Breast epithelium (tissue), 4 donors: ENCODE measurements at regions of chr12 and their contacts with region 1.

Region 1: GRCh38 chr12:54680374-54680773 is 32.2 kb upstream of the DCD start:
- DNase-seq: no peak
- H3K4me3 ChIP-seq: no peak overlapping the region
- H3K27ac ChIP-seq: peak overlapping the region in 1 of 2 donors; percentile 21
- H3K4me1 ChIP-seq: peaks cover 0 to 5% of the 10 kb centered on the region in 2 donors
- H3K27me3 ChIP-seq: no peaks in the 10 kb centered on the region
- CTCF ChIP-seq: no peak
- POLR2A ChIP-seq: no peak

Region 2: DNA sequence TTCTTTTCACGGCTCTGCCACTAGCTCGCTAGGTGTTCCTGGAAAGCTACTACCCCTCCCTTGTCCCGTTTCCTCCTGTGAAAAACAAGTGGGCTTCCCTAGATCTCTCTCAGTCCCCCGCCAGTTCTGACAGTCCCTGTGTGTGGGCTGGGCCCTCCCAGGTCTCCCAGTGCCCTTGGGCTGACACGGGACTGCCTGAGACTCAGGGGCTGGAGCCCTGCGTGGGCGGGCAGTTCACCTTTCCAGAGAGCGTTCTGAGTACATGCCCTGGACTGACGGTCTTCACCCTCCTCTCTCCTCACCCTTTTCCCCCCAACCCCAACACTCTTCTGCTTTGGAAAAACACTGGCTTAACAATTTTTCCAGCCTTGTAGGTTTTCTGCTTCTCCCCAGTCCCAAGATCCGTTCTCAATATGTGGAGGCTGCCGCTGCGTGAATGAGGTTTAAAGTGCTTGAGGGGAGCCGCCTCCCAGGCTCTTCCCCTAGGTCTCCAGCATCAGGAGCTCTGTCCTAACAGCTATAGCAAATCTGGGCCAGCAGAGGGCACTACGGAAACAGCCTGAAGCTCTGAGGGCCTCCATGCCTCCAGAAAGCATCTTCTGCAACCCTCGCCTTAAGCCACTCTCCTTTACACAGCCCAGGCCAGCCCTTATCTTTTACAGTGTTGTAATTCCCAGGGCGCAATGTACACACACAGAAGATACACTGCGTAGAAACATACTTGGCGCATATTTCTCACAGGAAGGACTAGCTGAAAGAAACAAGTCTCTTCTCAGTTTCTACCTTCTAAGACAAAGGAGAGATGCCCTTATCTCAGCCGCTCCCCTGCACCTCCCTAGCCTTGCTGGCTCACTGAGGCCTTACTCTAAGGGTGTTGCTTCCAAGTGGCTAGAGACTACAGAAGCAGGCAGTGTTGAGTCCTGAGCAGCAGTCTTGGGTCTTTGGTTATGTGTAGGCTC is 21.8 kb before region 1 on chr12:
- intact Hi-C with region 1: no loop called
- DNase-seq: no peak
- H3K4me3 ChIP-seq: no peak overlapping the region
- H3K27ac ChIP-seq: peak overlapping the region in 1 of 2 donors; percentile 20
- H3K4me1 ChIP-seq: no peaks in the 10 kb centered on the region
- H3K27me3 ChIP-seq: no peaks in the 10 kb centered on the region
- CTCF ChIP-seq: peak in 1 of 3 donors; percentile 15
- POLR2A ChIP-seq: no peak

Region 3: GRCh38 chr12:54723379-54724256 is 43.2 kb after region 1 on chr12:
- intact Hi-C with region 1: no loop called
- DNase-seq: no peak
- H3K4me3 ChIP-seq: no peak overlapping the region
- H3K27ac ChIP-seq: no peak overlapping the region
- H3K4me1 ChIP-seq: no peaks in the 10 kb centered on the region
- H3K27me3 ChIP-seq: no peaks in the 10 kb centered on the region
- CTCF ChIP-seq: peak in 1 of 3 donors; percentile 12
- POLR2A ChIP-seq: no peak

Region 4: DNA sequence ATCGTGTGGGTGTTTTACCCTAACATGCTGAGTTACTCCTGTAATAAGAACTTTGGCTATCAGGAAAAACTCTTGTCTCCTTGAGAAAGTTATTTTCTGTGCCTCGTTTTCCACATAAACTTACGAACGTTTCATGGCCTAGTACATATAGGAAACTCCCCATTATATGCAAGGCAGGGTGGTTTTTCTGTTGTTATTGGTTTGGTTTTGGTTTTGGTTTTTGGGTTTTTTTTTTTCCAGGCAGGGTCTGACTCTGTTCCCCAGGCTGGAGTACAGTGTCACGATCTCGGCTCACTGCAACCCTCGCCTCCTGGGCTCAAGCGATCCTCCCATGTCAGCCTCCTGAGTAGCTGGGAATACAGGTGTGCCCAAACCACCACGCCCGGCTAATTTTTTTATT is 655.6 kb after region 1 on chr12:
- intact Hi-C with region 1: loop called (anchors 5 kb)
- DNase-seq: no peak
- H3K4me3 ChIP-seq: no peak overlapping the region
- H3K27ac ChIP-seq: no peak overlapping the region
- H3K4me1 ChIP-seq: no peaks in the 10 kb centered on the region
- H3K27me3 ChIP-seq: no peaks in the 10 kb centered on the region
- CTCF ChIP-seq: no peak
- POLR2A ChIP-seq: no peak